GM10248 (cell line): ENCODE measurements at regions of chr14 and their contacts with region 1.

Region 1: DNA sequence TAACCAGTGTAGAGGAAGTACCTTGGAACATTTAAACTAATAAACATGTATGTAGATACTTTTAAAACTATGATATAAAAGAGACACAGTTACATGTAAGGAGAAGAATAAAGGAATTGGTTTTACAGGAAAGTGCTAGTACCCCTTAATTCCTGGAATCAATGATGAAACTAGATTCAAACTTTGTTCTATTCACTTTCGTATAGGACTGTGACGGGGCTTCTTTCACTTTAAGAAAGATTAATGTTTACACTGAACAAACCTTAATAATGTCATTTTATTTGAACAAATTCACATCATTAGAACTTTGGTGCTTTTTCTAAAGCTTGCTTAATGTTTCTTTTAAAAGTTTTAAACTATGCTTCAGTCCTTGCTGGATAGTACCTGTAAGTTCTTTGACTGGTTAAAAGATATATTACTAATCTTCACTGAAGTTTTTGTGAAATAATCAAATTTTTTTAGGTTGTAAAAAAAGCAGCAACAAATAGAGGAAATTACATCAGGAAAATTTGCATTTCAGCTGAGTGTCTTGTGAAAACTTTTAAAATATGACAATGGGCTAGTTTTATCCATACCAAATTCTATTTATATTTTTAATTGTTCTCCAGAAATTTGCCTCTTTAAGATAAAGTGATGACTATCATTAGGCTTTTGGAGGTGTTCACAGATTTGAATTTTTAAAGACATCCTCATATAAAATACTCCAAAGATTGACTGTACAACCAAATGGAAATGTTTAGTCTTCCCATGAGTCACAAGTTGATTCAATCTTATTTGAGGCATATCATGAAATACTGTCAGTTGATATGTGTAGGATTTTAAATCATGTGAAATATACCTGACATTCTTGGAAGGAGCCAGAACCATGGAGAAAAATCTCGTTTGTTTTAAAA is 36.2 kb downstream of the PAPOLA start:
- DNase-seq: no peak
- CTCF ChIP-seq: no peak

Region 2: GRCh38 chr14:96525452-96525851 is 12.9 kb before region 1 on chr14:
- CTCF ChIA-PET with region 1: interaction called, 14 read pairs
- POLR2A ChIA-PET with region 1: no interaction called
- DNase-seq: no peak
- CTCF ChIP-seq: no peak